ENCODE measurements at regions of chr6 and their contacts with region 1.

Region 1: DNA sequence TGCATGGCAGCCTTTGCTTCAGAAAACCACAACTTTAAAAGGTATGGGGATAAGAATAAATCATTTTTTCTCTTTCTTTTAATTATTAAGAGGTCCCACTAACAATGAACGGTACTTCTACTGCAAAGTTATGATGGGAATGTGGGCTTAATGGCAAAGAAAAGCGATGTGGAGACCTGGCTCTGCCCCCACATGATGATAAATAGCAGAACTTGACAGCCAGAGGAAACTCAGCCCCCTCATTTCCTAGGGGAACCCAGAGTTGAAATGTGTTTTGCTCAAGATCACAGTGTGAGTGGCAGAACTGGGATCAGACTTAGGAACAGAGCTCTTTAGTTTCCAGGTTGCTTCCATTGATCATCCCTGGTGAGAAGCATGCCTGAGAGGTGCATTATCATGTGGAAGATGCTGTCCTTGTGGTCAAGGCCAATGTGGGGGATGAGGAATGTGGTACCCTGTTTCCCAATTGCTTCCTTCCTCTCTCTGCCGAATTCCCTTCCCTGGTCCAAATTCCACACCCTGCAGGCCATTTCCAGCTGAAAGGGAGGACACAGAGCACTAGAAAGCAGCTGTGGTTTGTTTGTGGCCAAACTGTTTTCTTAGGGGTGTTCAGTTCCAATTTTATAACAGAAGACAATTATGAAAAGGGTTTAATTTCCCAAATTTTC is 66.0 kb downstream of the BACH2 start:
- DNase-seq: no peak
- ATAC-seq: no peak
- H3K4me3 ChIP-seq: no peak overlapping the region
- H3K4me3 Mint-ChIP-seq: peak overlapping the region; percentile 40 to 82 (median 56)
- H3K27ac ChIP-seq: peak overlapping the region; percentile 88
- H3K27ac Mint-ChIP-seq: peak overlapping the region; percentile 42 to 99 (median 95)
- H3K4me1 ChIP-seq: peaks cover 24 to 97% of the 10 kb centered on the region in 2 donors
- H3K4me1 Mint-ChIP-seq: peaks cover 54 to 100% (median 98%) of the 10 kb centered on the region in 7 donors
- H3K27me3 ChIP-seq: no peaks in the 10 kb centered on the region
- H3K27me3 Mint-ChIP-seq: peaks cover 0 to 2% (median 0%) of the 10 kb centered on the region in 5 donors

Region 2: GRCh38 chr6:89432875-89433251 is 797.8 kb before region 1 on chr6 and contains the start of gene ANKRD6:
- CTCF ChIA-PET with region 1: no interaction called
- POLR2A ChIA-PET with region 1: no interaction called
- intact Hi-C with region 1: no loop called
- DNase-seq: peak; percentile 61 to 96 (median 81)
- ATAC-seq: peak; percentile 98
- H3K4me3 ChIP-seq: peak within 1 kb of the TSS; percentile 63
- H3K4me3 Mint-ChIP-seq: peak within 1 kb of the TSS; percentile 83 to 95 (median 90)
- H3K27ac ChIP-seq: peak within 1 kb of the TSS; percentile 46
- H3K27ac Mint-ChIP-seq: peak within 1 kb of the TSS; percentile 43 to 93 (median 82)
- H3K4me1 ChIP-seq: peaks cover 7 to 13% of the 10 kb centered on the region in 2 donors
- H3K4me1 Mint-ChIP-seq: peaks cover 9 to 36% (median 22%) of the 10 kb centered on the region in 7 donors
- H3K27me3 ChIP-seq: no peaks in the 10 kb centered on the region
- H3K27me3 Mint-ChIP-seq: peaks cover 0 to 58% (median 0%) of the 10 kb centered on the region in 5 donors
- total RNA-seq, gene ANKRD6: 3.1 to 6.6 (median 3.8) TPM

Region 3: GRCh38 chr6:89711801-89712200 is 518.9 kb before region 1 on chr6:
- CTCF ChIA-PET with region 1: no interaction called
- POLR2A ChIA-PET with region 1: no interaction called
- intact Hi-C with region 1: no loop called
- DNase-seq: no peak
- ATAC-seq: no peak
- H3K4me3 ChIP-seq: no peak overlapping the region
- H3K4me3 Mint-ChIP-seq: no peak overlapping the region
- H3K27ac ChIP-seq: no peak overlapping the region
- H3K27ac Mint-ChIP-seq: no peak overlapping the region
- H3K4me1 ChIP-seq: no peaks in the 10 kb centered on the region
- H3K4me1 Mint-ChIP-seq: peaks cover 0 to 5% (median 0%) of the 10 kb centered on the region in 7 donors
- H3K27me3 ChIP-seq: no peaks in the 10 kb centered on the region
- H3K27me3 Mint-ChIP-seq: no peaks in the 10 kb centered on the region

Region 4: DNA sequence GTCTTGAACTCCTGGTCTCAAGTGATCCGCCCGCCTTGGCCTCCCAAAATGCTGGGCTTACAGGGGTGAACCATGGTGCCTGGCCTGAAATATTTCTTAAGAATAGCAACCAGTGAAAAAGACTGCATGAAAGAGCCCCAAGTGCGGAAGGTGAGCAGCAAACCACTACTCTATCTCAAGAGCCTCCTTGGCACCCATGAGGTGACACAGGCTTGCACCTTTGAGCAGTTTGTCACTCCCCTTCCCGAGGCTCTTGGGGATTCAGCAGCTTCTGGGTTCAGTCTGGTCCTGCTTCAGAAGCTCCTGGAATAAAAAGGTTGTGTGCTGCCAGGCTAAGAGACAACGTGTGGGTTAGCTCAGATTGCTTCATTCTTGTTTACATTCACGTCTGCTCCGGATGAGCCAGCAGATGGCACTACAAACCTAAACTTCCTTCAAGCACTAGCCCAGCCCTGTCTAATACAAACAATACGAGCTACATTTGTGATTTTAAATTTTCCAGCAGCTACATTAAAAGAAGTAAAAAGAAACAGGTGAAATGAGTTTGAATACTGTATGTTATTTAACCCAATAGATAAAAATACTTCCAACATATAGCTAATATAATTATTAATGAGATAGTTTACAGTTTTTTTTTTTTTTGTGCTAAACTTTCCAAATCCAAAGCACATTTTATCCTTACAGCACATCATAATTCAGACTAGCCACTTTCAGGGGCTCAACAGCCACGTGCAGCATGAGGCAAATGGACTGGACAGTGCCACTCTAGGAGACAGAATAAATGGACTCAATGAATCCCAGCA is 290.3 kb before region 1 on chr6:
- CTCF ChIA-PET with region 1: interaction called, 3 read pairs
- POLR2A ChIA-PET with region 1: no interaction called
- intact Hi-C with region 1: loop called in 1 of 2 experiments (anchors 5 kb)
- DNase-seq: peak; percentile 22 to 80 (median 70)
- ATAC-seq: peak; percentile 90
- H3K4me3 ChIP-seq: no peak overlapping the region
- H3K4me3 Mint-ChIP-seq: peak overlapping the region in 1 of 10 donors; percentile 48
- H3K27ac ChIP-seq: peak overlapping the region; percentile 53
- H3K27ac Mint-ChIP-seq: peak overlapping the region in 8 of 9 donors; percentile 50 to 91 (median 78)
- H3K4me1 ChIP-seq: peaks cover 0 to 9% of the 10 kb centered on the region in 2 donors
- H3K4me1 Mint-ChIP-seq: peaks cover 6 to 75% (median 39%) of the 10 kb centered on the region in 7 donors
- H3K27me3 ChIP-seq: no peaks in the 10 kb centered on the region
- H3K27me3 Mint-ChIP-seq: no peaks in the 10 kb centered on the region

Region 5: DNA sequence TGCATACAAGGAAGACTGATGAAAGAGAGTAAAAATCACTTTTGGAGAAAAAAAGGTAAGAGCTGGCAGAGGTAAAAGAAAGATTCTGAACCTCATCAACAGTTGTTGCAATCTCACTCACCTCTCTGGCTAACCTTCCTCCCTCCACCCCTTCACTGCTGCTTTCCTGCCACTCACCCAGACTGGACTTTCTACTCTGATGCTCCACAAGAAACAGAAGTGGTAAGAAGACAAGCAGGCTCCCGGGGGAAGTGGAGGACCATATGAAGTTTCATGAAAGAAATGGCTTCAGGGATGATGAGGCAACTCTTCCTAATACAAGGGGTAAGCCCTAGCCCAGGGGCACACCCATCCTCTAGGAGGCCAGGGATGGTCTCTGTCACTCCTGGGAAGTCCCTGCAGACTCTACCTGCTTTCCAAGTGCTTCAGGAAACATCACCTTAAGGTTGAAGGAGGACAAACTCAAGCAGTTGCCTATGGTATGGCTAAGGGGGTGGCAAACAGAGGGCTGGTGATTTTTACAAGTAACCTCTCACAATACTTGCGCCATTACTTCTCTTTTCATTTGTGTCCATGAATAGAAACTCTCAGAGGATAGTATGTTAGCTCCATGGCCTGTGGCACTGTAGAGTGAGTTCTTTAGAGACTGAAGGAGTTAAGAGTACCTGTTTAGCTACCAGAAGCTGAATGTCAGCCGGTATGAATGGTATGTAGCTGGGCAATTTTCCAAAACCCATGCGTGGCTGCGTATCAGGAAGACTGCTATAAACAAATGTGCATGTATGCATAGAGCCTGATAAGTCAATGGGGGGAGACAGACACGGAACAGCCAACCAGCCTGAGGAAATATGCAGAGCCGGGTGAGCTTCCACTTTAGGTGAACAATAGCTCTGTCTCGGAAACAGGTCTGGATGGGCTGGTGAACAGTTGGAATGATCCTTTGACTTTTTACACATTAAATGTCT is 46.1 kb before region 1 on chr6:
- CTCF ChIA-PET with region 1: no interaction called
- POLR2A ChIA-PET with region 1: interaction called, 5 read pairs
- intact Hi-C with region 1: loop called (anchors 1 to 2 kb)
- DNase-seq: peak in 2 of 9 donors; percentile 31 to 41
- ATAC-seq: no peak
- H3K4me3 ChIP-seq: peak overlapping the region; percentile 18
- H3K4me3 Mint-ChIP-seq: peak overlapping the region; percentile 1 to 81 (median 66)
- H3K27ac ChIP-seq: peak overlapping the region; percentile 50
- H3K27ac Mint-ChIP-seq: peak overlapping the region; percentile 47 to 97 (median 93)
- H3K4me1 ChIP-seq: peaks cover 0 to 63% of the 10 kb centered on the region in 2 donors
- H3K4me1 Mint-ChIP-seq: peaks cover 34 to 91% (median 79%) of the 10 kb centered on the region in 7 donors
- H3K27me3 ChIP-seq: no peaks in the 10 kb centered on the region
- H3K27me3 Mint-ChIP-seq: no peaks in the 10 kb centered on the region

Region 6: GRCh38 chr6:90216072-90216977 is 14.4 kb before region 1 on chr6:
- CTCF ChIA-PET with region 1: interaction called, 3 read pairs
- POLR2A ChIA-PET with region 1: interaction called, 22 read pairs
- intact Hi-C with region 1: loop called (anchors 1 kb)
- DNase-seq: peak in 5 of 9 donors; percentile 61 to 82 (median 63)
- ATAC-seq: peak; percentile 69
- H3K4me3 ChIP-seq: peak overlapping the region; percentile 18
- H3K4me3 Mint-ChIP-seq: peak overlapping the region in 7 of 10 donors; percentile 42 to 74 (median 68)
- H3K27ac ChIP-seq: peak overlapping the region; percentile 85
- H3K27ac Mint-ChIP-seq: no peak overlapping the region
- H3K4me1 ChIP-seq: peaks cover 0 to 97% of the 10 kb centered on the region in 2 donors
- H3K4me1 Mint-ChIP-seq: peaks cover 0 to 33% (median 31%) of the 10 kb centered on the region in 7 donors
- H3K27me3 ChIP-seq: no peaks in the 10 kb centered on the region
- H3K27me3 Mint-ChIP-seq: no peaks in the 10 kb centered on the region

Region 7: DNA sequence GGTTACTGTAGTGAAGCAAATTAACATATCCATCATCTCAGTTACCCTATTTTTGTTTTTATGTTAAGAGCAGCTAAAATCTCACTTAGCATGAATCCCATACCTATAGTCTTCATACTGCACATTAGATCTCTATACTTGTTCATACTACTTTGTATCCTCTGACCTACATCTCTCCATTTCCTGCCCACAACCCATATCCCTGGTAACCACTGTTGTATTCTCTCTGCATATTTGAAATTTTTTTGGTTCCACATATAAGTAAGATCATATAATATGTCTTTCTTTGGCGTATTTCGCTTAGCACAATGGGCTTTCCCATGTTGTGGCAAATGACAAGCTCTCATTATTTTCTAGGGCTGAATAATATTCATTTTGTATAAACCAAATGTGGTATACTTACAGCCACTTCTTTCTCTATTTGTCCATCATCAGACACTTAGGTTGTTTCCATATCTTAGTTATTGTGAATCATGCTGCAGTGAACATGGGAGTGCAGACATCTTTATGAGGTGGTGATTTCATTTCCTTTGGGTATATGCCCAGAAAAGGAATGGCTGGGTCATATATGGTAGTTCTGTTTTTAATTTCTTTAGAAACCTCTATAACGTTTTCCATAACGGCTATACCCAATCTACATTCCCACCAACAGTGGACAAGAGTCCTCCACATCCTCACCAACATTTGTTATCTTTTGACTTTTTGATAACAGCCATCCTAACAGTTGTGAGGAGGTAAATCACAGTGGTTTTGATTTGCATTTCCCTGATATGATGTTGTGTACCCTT is 26.2 kb after region 1 on chr6:
- CTCF ChIA-PET with region 1: no interaction called
- POLR2A ChIA-PET with region 1: interaction called, 3 read pairs
- intact Hi-C with region 1: loop called in 1 of 2 experiments (anchors 1 kb)
- DNase-seq: peak in 6 of 9 donors; percentile 57 to 76 (median 66)
- ATAC-seq: peak; percentile 82
- H3K4me3 ChIP-seq: no peak overlapping the region
- H3K4me3 Mint-ChIP-seq: peak overlapping the region in 7 of 10 donors; percentile 1 to 71 (median 20)
- H3K27ac ChIP-seq: peak overlapping the region; percentile 59
- H3K27ac Mint-ChIP-seq: peak overlapping the region; percentile 9 to 98 (median 75)
- H3K4me1 ChIP-seq: peaks cover 0 to 63% of the 10 kb centered on the region in 2 donors
- H3K4me1 Mint-ChIP-seq: peaks cover 42 to 97% (median 95%) of the 10 kb centered on the region in 7 donors
- H3K27me3 ChIP-seq: no peaks in the 10 kb centered on the region
- H3K27me3 Mint-ChIP-seq: no peaks in the 10 kb centered on the region

Region 8: DNA sequence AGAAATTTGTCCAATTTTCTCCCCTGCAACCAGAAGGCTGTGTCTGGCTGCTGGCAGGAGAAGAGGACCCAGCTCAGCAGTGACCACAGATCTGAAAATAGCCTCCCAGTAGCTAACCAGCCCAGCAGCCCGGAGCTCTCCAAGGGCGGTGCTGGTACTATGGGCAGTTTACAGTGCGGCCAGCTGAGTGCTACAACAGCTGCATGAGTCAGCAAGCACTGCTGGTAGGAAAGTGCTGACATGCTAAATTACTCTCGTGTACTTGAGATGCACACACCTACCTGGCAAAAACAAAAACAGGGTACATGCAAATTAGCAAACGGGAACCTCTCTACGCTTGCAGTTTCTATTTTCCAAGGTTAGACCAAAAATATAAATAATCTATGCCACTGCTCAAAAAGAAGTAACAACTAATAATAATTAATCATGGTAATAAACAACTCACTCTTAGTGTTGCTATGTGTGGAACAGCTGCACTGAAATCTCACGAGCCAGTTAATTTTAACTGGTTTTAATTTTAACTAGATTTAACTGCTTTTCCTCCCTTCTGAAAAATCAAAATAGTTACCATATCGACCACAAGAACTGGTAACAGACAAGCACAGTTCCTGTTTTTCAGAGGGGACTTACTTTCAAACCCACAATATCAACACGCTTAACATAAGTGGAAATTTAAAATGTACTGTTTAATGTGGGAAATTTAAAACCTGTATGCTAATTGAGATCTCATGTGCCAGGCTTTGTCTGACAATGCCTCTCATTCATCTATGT is 55.1 kb after region 1 on chr6:
- CTCF ChIA-PET with region 1: interaction called, 4 read pairs
- POLR2A ChIA-PET with region 1: interaction called, 4 read pairs
- intact Hi-C with region 1: loop called in 1 of 2 experiments (anchors 1 kb)
- DNase-seq: peak in 8 of 9 donors; percentile 53 to 87 (median 74)
- ATAC-seq: peak; percentile 68
- H3K4me3 ChIP-seq: peak overlapping the region; percentile 51
- H3K4me3 Mint-ChIP-seq: peak overlapping the region; percentile 83 to 94 (median 88)
- H3K27ac ChIP-seq: peak overlapping the region; percentile 81
- H3K27ac Mint-ChIP-seq: peak overlapping the region; percentile 89 to 100 (median 96)
- H3K4me1 ChIP-seq: peaks cover 21 to 72% of the 10 kb centered on the region in 2 donors
- H3K4me1 Mint-ChIP-seq: peaks cover 54 to 96% (median 92%) of the 10 kb centered on the region in 7 donors
- H3K27me3 ChIP-seq: no peaks in the 10 kb centered on the region
- H3K27me3 Mint-ChIP-seq: peaks cover 0 to 2% (median 0%) of the 10 kb centered on the region in 5 donors

Region 9: GRCh38 chr6:90356012-90356421 is 125.3 kb after region 1 on chr6:
- CTCF ChIA-PET with region 1: no interaction called
- POLR2A ChIA-PET with region 1: no interaction called
- intact Hi-C with region 1: no loop called
- DNase-seq: no peak
- ATAC-seq: no peak
- H3K4me3 ChIP-seq: no peak overlapping the region
- H3K4me3 Mint-ChIP-seq: no peak overlapping the region
- H3K27ac ChIP-seq: no peak overlapping the region
- H3K27ac Mint-ChIP-seq: peak overlapping the region in 1 of 9 donors; percentile 76
- H3K4me1 ChIP-seq: peaks cover 3 to 4% of the 10 kb centered on the region in 2 donors
- H3K4me1 Mint-ChIP-seq: peaks cover 8 to 22% (median 16%) of the 10 kb centered on the region in 7 donors
- H3K27me3 ChIP-seq: peaks cover 0 to 4% of the 10 kb centered on the region in 2 donors
- H3K27me3 Mint-ChIP-seq: no peaks in the 10 kb centered on the region

Region 10: GRCh38 chr6:90369024-90369519 is 138.4 kb after region 1 on chr6:
- CTCF ChIA-PET with region 1: no interaction called
- POLR2A ChIA-PET with region 1: no interaction called
- intact Hi-C with region 1: no loop called
- DNase-seq: no peak
- ATAC-seq: peak; percentile 70
- H3K4me3 ChIP-seq: no peak overlapping the region
- H3K4me3 Mint-ChIP-seq: peak overlapping the region in 1 of 10 donors; percentile 1
- H3K27ac ChIP-seq: no peak overlapping the region
- H3K27ac Mint-ChIP-seq: no peak overlapping the region
- H3K4me1 ChIP-seq: no peaks in the 10 kb centered on the region
- H3K4me1 Mint-ChIP-seq: peaks cover 0 to 21% (median 8%) of the 10 kb centered on the region in 7 donors
- H3K27me3 ChIP-seq: no peaks in the 10 kb centered on the region
- H3K27me3 Mint-ChIP-seq: peaks cover 0 to 14% (median 0%) of the 10 kb centered on the region in 5 donors

Measured in naive thymus-derived CD4-positive, alpha-beta T cell (primary cell).